IMR-90 (cell line): ENCODE measurements at regions of chr1 and their contacts with region 1.

Region 1: DNA sequence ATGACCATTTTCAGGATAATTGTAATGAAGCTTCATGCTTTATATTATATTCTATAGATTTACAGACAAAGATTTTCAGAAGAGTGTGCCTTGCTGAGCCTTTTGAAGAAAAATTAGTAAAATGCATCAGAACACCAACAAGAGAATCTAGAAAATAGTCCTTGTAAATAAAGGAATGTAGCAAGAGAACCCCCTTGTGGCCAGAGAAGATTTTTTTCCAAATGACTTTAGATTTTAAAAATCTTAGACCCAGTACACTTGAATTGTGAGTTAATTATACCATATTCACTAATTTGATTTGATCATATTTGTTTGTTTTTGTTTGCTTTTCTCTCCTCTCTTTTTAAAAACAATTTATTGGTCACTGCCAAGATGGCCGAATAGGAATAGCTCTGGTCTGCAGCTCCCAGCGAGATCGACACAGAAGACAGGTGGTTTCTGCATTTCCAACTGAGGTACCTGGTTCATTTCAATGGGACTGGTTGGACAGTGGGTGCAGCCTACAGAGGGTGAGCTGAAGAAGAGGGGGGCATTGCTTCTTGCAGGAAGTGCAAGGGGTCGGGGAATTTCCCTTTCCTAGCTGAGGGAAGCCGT is 12.8 kb upstream of the IFI44L start:
- DNase-seq: peak; percentile 51
- ATAC-seq: no peak; the same call in 1 of the 2 replicates
- H3K4me3 ChIP-seq: no peak overlapping the region
- H3K27ac ChIP-seq: no peak overlapping the region
- H3K4me1 ChIP-seq: 0 out of 2 replicates have a peak, but pooled peaks cover 2% of the 10 kb centered on the region
- H3K27me3 ChIP-seq: no peaks in the 10 kb centered on the region
- CTCF ChIP-seq: peak; percentile 79
- POLR2A ChIP-seq: no peak
- RAD21 ChIP-seq: peak; percentile 83

Region 2: DNA sequence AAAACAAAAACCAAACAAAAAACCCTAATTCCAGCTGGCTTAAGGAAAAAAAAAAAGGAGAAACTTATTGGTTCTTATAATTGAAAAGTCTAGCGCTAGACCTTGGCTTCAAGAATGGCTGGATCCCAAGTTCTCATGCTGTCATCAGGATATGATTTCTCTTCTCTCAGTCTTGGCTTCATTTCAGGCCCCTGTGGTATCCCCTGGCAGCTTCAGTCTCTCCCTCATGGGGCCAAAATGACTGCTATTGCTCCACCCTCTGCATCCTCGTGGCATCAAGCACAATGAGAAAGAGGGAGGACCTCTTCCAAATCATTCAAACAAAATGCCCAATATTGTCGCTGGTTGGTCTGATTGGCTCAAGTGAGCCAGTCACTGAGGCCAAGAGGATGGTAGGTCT is 480.9 kb before region 1 on chr1:
- CTCF ChIA-PET with region 1: interaction called, 14 read pairs
- POLR2A ChIA-PET with region 1: interaction called, 3 read pairs
- dilution Hi-C with region 1: no loop called
- in situ Hi-C with region 1: loop called (anchors 5 kb)
- intact Hi-C with region 1: loop called (anchors 1 kb)
- DNase-seq: no peak
- ATAC-seq: no peak
- H3K4me3 ChIP-seq: no peak overlapping the region
- H3K27ac ChIP-seq: no peak overlapping the region
- H3K4me1 ChIP-seq: no peaks in the 10 kb centered on the region
- H3K27me3 ChIP-seq: no peaks in the 10 kb centered on the region
- CTCF ChIP-seq: no peak
- POLR2A ChIP-seq: no peak
- RAD21 ChIP-seq: no peak

Region 3: GRCh38 chr1:78132174-78132947 is 475.1 kb before region 1 on chr1:
- CTCF ChIA-PET with region 1: interaction called, 14 read pairs
- POLR2A ChIA-PET with region 1: interaction called, 3 read pairs
- dilution Hi-C with region 1: no loop called
- in situ Hi-C with region 1: loop called (anchors 5 kb)
- intact Hi-C with region 1: loop called (anchors 1 kb)
- DNase-seq: no peak
- ATAC-seq: no peak
- H3K4me3 ChIP-seq: no peak overlapping the region
- H3K27ac ChIP-seq: no peak overlapping the region
- H3K4me1 ChIP-seq: no peaks in the 10 kb centered on the region
- H3K27me3 ChIP-seq: no peaks in the 10 kb centered on the region
- CTCF ChIP-seq: no peak
- POLR2A ChIP-seq: no peak
- RAD21 ChIP-seq: no peak

Region 4: DNA sequence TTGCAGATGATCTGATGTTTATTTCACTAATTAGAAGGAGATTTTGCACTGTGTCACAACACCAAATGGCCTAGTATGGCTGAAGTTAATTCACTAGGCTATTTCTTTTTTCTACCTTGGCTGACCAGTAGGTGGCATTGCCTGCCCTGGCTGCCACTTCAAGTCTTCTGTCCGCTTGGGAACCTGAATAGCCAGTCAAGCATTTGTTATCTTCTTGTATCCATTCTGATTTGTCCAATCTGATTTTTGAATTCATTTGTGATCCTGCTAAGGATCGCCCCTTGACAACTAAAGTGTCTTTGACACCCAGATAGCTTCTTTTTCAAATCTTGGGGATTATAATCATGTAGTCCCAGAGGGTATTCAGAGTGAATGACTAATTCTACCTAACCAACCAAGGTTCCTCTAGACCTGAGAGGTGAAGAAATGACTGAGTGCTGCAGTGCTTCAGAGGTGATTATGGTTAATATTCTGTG is 462.3 kb before region 1 on chr1:
- CTCF ChIA-PET with region 1: interaction called, 32 read pairs
- POLR2A ChIA-PET with region 1: no interaction called
- dilution Hi-C with region 1: loop called (anchors 10 kb)
- in situ Hi-C with region 1: no loop called
- intact Hi-C with region 1: loop called (anchors 1 kb)
- DNase-seq: peak; percentile 82
- ATAC-seq: peak; percentile 95
- H3K4me3 ChIP-seq: no peak overlapping the region
- H3K27ac ChIP-seq: no peak overlapping the region
- H3K4me1 ChIP-seq: no peaks in the 10 kb centered on the region; the same call in 1 of the 2 replicates
- H3K27me3 ChIP-seq: no peaks in the 10 kb centered on the region
- CTCF ChIP-seq: peak; percentile 97
- POLR2A ChIP-seq: peak; percentile 46; the same call in 1 of the 2 replicates
- RAD21 ChIP-seq: peak; percentile 98

Region 5: GRCh38 chr1:78340006-78340405 is 267.4 kb before region 1 on chr1:
- CTCF ChIA-PET with region 1: interaction called, 4 read pairs
- POLR2A ChIA-PET with region 1: no interaction called
- dilution Hi-C with region 1: no loop called
- in situ Hi-C with region 1: no loop called
- intact Hi-C with region 1: loop called (anchors 10 kb)
- DNase-seq: peak; percentile 88
- ATAC-seq: peak; percentile 83
- H3K4me3 ChIP-seq: no peak overlapping the region
- H3K27ac ChIP-seq: no peak overlapping the region; the same call in 1 of the 2 replicates
- H3K4me1 ChIP-seq: peaks cover 7% of the 10 kb centered on the region; the same call in 1 of the 2 replicates
- H3K27me3 ChIP-seq: no peaks in the 10 kb centered on the region
- CTCF ChIP-seq: no peak
- POLR2A ChIP-seq: no peak
- RAD21 ChIP-seq: no peak

Region 6: DNA sequence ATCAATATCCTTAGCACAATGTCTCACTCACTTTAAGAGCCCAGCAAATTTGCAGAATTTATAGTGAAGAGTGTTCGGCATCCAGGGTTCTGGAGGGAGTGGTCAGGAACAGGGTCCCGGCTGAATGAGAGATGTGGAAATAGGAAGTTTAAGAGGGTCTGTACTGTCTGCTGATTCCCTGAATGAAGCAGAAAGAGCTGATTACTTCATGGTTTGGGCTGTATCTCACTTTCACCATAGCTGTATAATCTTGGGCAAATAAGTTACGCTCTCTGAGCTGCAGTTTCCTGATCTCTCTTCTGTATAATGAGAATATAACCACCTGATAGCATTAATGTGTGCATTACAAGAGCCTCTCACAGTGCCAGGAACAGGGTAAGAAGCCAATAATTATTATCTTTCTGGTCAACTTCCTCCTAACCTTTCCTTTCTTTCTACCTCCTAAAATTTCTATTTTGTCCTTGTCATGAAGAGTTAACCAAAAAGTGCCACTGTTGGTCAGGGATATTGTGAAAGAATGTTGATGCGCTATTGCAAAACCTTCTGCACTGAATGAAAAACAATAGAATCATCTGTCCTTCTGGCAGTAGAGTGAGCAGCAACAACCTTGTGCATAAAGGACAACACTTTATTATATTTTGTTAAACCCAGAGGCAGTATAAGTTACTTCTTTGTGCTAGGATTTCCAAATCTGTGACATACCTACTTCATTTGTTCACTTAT is 131.4 kb before region 1 on chr1:
- CTCF ChIA-PET with region 1: no interaction called
- POLR2A ChIA-PET with region 1: no interaction called
- dilution Hi-C with region 1: no loop called
- in situ Hi-C with region 1: no loop called
- intact Hi-C with region 1: no loop called
- DNase-seq: no peak
- ATAC-seq: no peak
- H3K4me3 ChIP-seq: no peak overlapping the region
- H3K27ac ChIP-seq: no peak overlapping the region
- H3K4me1 ChIP-seq: peaks cover 4% of the 10 kb centered on the region; the same call in 1 of the 2 replicates
- H3K27me3 ChIP-seq: no peaks in the 10 kb centered on the region
- CTCF ChIP-seq: no peak
- POLR2A ChIP-seq: no peak
- RAD21 ChIP-seq: no peak

Region 7: GRCh38 chr1:78491451-78492071 is 115.9 kb before region 1 on chr1:
- CTCF ChIA-PET with region 1: no interaction called
- POLR2A ChIA-PET with region 1: no interaction called
- dilution Hi-C with region 1: no loop called
- in situ Hi-C with region 1: no loop called
- intact Hi-C with region 1: loop called (anchors 2 kb)
- DNase-seq: peak; percentile 61
- ATAC-seq: peak; percentile 79
- H3K4me3 ChIP-seq: peak overlapping the region; percentile 61
- H3K27ac ChIP-seq: peak overlapping the region; percentile 47
- H3K4me1 ChIP-seq: no peaks in the 10 kb centered on the region; the same call in 1 of the 2 replicates
- H3K27me3 ChIP-seq: no peaks in the 10 kb centered on the region
- CTCF ChIP-seq: no peak
- POLR2A ChIP-seq: no peak
- RAD21 ChIP-seq: no peak